ENCODE measurements at regions of chr6 and their contacts with region 1.

Region 1: DNA sequence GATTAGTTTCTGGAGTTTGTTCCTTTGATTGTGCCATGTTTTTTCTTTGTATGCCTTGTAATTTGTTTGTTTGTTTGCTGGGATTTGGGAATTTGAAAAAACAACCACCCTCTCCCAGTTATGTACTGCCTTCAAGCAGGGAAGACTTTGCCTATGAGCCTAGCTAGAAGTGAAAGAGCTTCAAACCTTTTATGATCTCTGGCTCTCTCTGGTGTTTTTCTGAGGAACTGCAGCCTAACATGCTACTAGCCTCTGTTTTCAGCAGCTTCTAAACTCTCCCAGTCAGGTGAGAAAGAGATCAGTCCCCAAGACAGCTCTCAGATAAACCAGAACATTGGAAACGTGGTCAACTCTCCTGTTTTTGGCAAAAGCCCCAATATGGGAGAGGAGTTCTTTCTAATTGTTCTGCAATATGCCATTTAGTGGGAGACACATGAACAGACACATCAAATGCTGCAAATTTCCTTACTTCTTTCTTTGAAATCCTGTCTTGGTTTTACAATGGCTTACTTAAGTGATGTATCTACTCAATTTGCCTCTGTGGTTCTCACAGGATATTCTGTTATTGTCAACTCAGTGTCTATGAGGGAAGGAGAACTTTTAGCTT is 58.9 kb upstream of the SERINC1 start:
- DNase-seq: peak; percentile 16
- H3K4me3 ChIP-seq: no peak overlapping the region
- H3K27me3 ChIP-seq: no peaks in the 10 kb centered on the region
- CTCF ChIP-seq: peak; percentile 93

Region 2: GRCh38 chr6:122381497-122382265 is 148.9 kb before region 1 on chr6:
- CTCF ChIA-PET with region 1: interaction called, 73 read pairs
- POLR2A ChIA-PET with region 1: no interaction called
- DNase-seq: peak; percentile 20
- H3K4me3 ChIP-seq: no peak overlapping the region
- H3K27me3 ChIP-seq: peaks cover 3% of the 10 kb centered on the region; the same call in 1 of the 2 replicates
- CTCF ChIP-seq: peak; percentile 88

Region 3: GRCh38 chr6:122438975-122439374 is 91.6 kb before region 1 on chr6:
- CTCF ChIA-PET with region 1: no interaction called
- POLR2A ChIA-PET with region 1: no interaction called
- DNase-seq: no peak
- H3K4me3 ChIP-seq: no peak overlapping the region
- H3K27me3 ChIP-seq: no peaks in the 10 kb centered on the region
- CTCF ChIP-seq: no peak

Region 4: DNA sequence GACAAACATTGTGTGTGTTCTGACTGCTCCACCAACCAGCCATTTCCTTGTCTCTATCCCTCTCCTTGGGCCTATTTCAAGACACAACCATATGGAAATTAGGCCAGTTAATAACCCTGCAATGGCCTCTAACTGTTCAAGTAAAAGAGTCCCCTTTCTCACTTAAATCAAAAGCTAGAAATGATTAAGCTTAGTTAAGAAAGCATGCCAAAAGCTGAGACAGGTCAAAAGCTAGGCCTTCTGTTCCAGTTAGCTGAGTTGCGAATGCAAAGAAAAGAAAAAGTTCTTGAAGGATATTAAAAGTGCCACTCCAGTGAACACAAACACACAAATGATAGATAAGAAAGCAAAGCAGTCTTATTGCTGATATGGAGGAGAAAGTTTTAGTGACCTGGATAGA is 81.5 kb before region 1 on chr6:
- CTCF ChIA-PET with region 1: no interaction called
- POLR2A ChIA-PET with region 1: no interaction called
- DNase-seq: no peak
- H3K4me3 ChIP-seq: no peak overlapping the region
- H3K27me3 ChIP-seq: no peaks in the 10 kb centered on the region
- CTCF ChIP-seq: no peak

Region 5: GRCh38 chr6:122471107-122472021 is 59.2 kb before region 1 on chr6 and contains the start of gene SERINC1:
- CTCF ChIA-PET with region 1: interaction called, 22 read pairs
- POLR2A ChIA-PET with region 1: no interaction called
- DNase-seq: peak; percentile 81
- H3K4me3 ChIP-seq: peak within 1 kb of the TSS; percentile 91
- H3K27me3 ChIP-seq: no peaks in the 10 kb centered on the region
- CTCF ChIP-seq: no peak
- polyA plus RNA-seq, gene SERINC1: 89.7 and 182 TPM in 2 replicates

Region 6: GRCh38 chr6:122491919-122492555 is 38.5 kb before region 1 on chr6:
- CTCF ChIA-PET with region 1: interaction called, 101 read pairs
- POLR2A ChIA-PET with region 1: interaction called, 3 read pairs
- DNase-seq: no peak
- H3K4me3 ChIP-seq: no peak overlapping the region
- H3K27me3 ChIP-seq: no peaks in the 10 kb centered on the region
- CTCF ChIP-seq: peak; percentile 96

Region 7: GRCh38 chr6:122511193-122511924 is 19.2 kb before region 1 on chr6:
- CTCF ChIA-PET with region 1: interaction called, 10 read pairs
- POLR2A ChIA-PET with region 1: no interaction called
- DNase-seq: no peak
- H3K4me3 ChIP-seq: no peak overlapping the region
- H3K27me3 ChIP-seq: no peaks in the 10 kb centered on the region
- CTCF ChIP-seq: no peak

Region 8: GRCh38 chr6:122520179-122520578 is 10.4 kb before region 1 on chr6:
- CTCF ChIA-PET with region 1: interaction called, 16 read pairs
- POLR2A ChIA-PET with region 1: no interaction called
- DNase-seq: no peak
- H3K4me3 ChIP-seq: no peak overlapping the region
- H3K27me3 ChIP-seq: no peaks in the 10 kb centered on the region
- CTCF ChIP-seq: no peak

Region 9: DNA sequence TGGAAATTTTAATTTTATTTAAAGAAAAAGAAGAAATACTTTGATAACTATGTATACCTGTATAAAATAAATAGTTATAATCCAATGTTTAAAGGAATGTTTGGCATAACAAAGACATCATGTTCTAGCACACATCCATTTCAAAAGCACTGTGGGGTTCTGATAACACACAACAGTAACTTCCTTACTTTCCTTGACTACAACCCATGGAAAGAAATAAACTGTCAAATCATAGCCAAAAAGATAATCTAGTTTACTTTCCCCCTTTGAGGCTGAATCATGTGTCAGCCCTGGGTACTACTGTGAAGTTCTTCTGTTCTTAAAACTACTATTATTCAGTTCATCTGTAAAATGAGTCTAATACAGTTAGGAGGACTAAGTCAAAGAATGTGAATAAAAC is 18.3 kb after region 1 on chr6:
- CTCF ChIA-PET with region 1: no interaction called
- POLR2A ChIA-PET with region 1: no interaction called
- DNase-seq: no peak
- H3K4me3 ChIP-seq: no peak overlapping the region
- H3K27me3 ChIP-seq: no peaks in the 10 kb centered on the region
- CTCF ChIP-seq: no peak